B cell (primary cell): ENCODE measurements at regions of chr9 and their contacts with region 1.

Region 1: GRCh38 chr9:108761655-108762347 is 94.0 kb downstream of the ACTL7B start:
- DNase-seq: peak; percentile 60
- ATAC-seq: no peak
- H3K4me3 ChIP-seq: no peak overlapping the region
- H3K4me3 Mint-ChIP-seq: no peak overlapping the region
- H3K27ac ChIP-seq: no peak overlapping the region
- H3K27ac Mint-ChIP-seq: no peak overlapping the region
- H3K4me1 ChIP-seq: peaks cover 3 to 10% of the 10 kb centered on the region in 2 donors
- H3K4me1 Mint-ChIP-seq: peaks cover 7% of the 10 kb centered on the region
- H3K27me3 ChIP-seq: no peaks in the 10 kb centered on the region
- H3K27me3 Mint-ChIP-seq: no peaks in the 10 kb centered on the region
- CTCF ChIP-seq: peak; percentile 91

Region 2: GRCh38 chr9:107421947-107422793 is 1339.6 kb before region 1 on chr9:
- CTCF ChIA-PET with region 1: interaction called, 15 read pairs
- POLR2A ChIA-PET with region 1: no interaction called
- intact Hi-C with region 1: no loop called
- DNase-seq: peak; percentile 30
- ATAC-seq: no peak
- H3K4me3 ChIP-seq: no peak overlapping the region
- H3K4me3 Mint-ChIP-seq: no peak overlapping the region
- H3K27ac ChIP-seq: no peak overlapping the region
- H3K27ac Mint-ChIP-seq: no peak overlapping the region
- H3K4me1 ChIP-seq: peaks cover 3 to 8% of the 10 kb centered on the region in 2 donors
- H3K4me1 Mint-ChIP-seq: peaks cover 9% of the 10 kb centered on the region
- H3K27me3 ChIP-seq: peaks cover 0 to 11% (median 5%) of the 10 kb centered on the region in 4 experiments
- H3K27me3 Mint-ChIP-seq: peaks cover 30% of the 10 kb centered on the region
- CTCF ChIP-seq: no peak

Region 3: DNA sequence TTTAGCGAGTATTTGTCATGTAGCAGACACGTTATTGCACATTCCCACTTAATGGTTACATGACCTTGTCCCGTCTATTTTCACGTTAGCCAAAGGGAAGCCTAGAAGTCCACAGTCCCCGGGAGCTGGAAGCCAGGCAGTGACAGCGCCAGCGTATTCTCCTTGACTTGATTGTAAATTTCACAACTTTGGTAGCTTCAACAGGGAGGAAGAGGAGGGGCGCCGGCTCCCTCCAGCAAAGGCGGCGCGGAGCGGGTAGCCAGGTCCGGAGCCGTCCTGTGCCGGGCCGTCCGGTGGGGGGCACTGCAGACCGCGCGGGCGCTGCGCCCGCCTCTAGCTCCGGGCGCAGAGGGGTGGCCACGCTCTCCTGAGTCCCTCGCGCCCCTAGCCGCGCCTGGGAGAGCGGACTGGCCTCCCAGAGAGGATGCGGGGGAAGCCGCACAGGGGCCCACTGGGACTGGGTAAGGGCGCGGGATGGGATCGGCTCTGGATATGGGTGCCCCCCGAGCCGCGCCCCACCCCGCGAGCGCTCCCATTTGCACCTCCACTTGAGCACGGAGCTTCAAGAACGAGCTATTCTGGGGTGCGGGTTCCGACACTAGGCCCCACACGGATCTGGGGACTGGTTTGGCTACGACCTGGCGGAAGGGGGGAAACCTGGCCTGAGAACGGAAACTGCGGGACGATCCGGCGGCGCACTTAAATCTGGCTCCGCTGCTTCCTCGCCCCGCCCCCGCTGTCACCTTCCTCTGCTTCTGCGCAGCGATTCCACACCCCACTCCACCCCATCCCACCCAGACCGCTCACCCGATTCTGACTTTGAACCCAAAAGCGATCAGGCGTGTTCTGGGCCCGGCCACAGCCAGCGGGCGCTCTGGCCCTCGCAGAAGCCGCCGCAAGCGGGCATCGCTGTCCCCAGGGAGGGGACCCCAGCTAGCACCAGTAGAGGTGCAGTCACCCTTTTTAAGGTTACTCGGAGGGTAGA is 1296.0 kb before region 1 on chr9:
- CTCF ChIA-PET with region 1: interaction called, 11 read pairs
- POLR2A ChIA-PET with region 1: no interaction called
- intact Hi-C with region 1: no loop called
- DNase-seq: peak; percentile 64
- ATAC-seq: peak; percentile 84
- H3K4me3 ChIP-seq: peak overlapping the region; percentile 25 to 59 (median 47)
- H3K4me3 Mint-ChIP-seq: peak overlapping the region; percentile 80
- H3K27ac ChIP-seq: no peak overlapping the region
- H3K27ac Mint-ChIP-seq: no peak overlapping the region
- H3K4me1 ChIP-seq: peaks cover 13 to 15% of the 10 kb centered on the region in 2 donors
- H3K4me1 Mint-ChIP-seq: peaks cover 13% of the 10 kb centered on the region
- H3K27me3 ChIP-seq: peaks cover 0 to 25% (median 17%) of the 10 kb centered on the region in 4 experiments
- H3K27me3 Mint-ChIP-seq: peaks cover 39% of the 10 kb centered on the region
- CTCF ChIP-seq: peak; percentile 78

Region 4: GRCh38 chr9:107484117-107484723 is 1277.6 kb before region 1 on chr9:
- CTCF ChIA-PET with region 1: interaction called, 6 read pairs
- POLR2A ChIA-PET with region 1: no interaction called
- intact Hi-C with region 1: loop called (anchors 5 kb)
- DNase-seq: peak; percentile 65
- ATAC-seq: no peak
- H3K4me3 ChIP-seq: no peak overlapping the region
- H3K4me3 Mint-ChIP-seq: no peak overlapping the region
- H3K27ac ChIP-seq: no peak overlapping the region
- H3K27ac Mint-ChIP-seq: no peak overlapping the region
- H3K4me1 ChIP-seq: peaks cover 17 to 23% of the 10 kb centered on the region in 2 donors
- H3K4me1 Mint-ChIP-seq: peaks cover 9% of the 10 kb centered on the region
- H3K27me3 ChIP-seq: peaks cover 0 to 27% (median 12%) of the 10 kb centered on the region in 4 experiments
- H3K27me3 Mint-ChIP-seq: peaks cover 22% of the 10 kb centered on the region
- CTCF ChIP-seq: peak; percentile 62

Region 5: DNA sequence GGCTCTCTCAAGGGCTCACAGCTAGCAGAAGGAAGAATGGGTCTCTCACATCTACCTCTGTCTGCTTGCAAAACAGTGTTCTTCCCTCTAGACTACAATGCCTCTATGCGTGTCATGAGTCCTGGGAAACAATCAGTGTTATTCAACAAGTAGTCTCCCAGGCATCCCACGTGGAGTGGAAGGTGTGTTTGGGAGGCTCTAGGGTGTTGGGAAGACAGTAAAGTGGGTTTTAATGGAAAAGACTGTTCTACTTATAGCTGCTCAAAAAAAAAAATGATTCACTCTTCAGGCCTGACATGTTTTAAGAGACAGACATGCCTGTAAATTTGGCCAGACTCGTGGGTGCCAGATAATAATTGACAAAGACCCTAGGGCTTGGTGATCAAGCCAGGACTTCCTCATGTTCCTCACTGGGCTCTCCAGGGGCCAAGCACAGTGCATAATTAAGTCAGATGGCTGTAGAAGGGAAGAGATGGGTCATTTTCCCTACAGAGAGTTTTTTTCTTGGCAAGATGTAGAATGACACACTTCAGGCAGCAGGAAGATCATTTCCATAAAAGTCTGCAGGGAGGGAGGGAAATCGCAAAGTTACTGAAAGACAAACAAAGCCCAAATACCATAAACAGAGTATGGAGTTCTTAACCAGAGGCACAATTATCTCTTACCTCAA is 152.4 kb before region 1 on chr9:
- CTCF ChIA-PET with region 1: no interaction called
- POLR2A ChIA-PET with region 1: no interaction called
- intact Hi-C with region 1: no loop called
- DNase-seq: no peak
- ATAC-seq: no peak
- H3K4me3 ChIP-seq: no peak overlapping the region
- H3K4me3 Mint-ChIP-seq: no peak overlapping the region
- H3K27ac ChIP-seq: no peak overlapping the region
- H3K27ac Mint-ChIP-seq: no peak overlapping the region
- H3K4me1 ChIP-seq: no peaks in the 10 kb centered on the region
- H3K4me1 Mint-ChIP-seq: no peaks in the 10 kb centered on the region
- H3K27me3 ChIP-seq: no peaks in the 10 kb centered on the region
- H3K27me3 Mint-ChIP-seq: no peaks in the 10 kb centered on the region
- CTCF ChIP-seq: no peak

Region 6: GRCh38 chr9:108621991-108622855 is 139.6 kb before region 1 on chr9:
- CTCF ChIA-PET with region 1: no interaction called
- POLR2A ChIA-PET with region 1: no interaction called
- intact Hi-C with region 1: no loop called
- DNase-seq: no peak
- ATAC-seq: no peak
- H3K4me3 ChIP-seq: no peak overlapping the region
- H3K4me3 Mint-ChIP-seq: no peak overlapping the region
- H3K27ac ChIP-seq: no peak overlapping the region
- H3K27ac Mint-ChIP-seq: no peak overlapping the region
- H3K4me1 ChIP-seq: no peaks in the 10 kb centered on the region
- H3K4me1 Mint-ChIP-seq: no peaks in the 10 kb centered on the region
- H3K27me3 ChIP-seq: no peaks in the 10 kb centered on the region
- H3K27me3 Mint-ChIP-seq: peaks cover 5% of the 10 kb centered on the region
- CTCF ChIP-seq: no peak

Region 7: GRCh38 chr9:108710424-108710823 is 51.4 kb before region 1 on chr9:
- CTCF ChIA-PET with region 1: no interaction called
- POLR2A ChIA-PET with region 1: no interaction called
- intact Hi-C with region 1: no loop called
- DNase-seq: no peak
- ATAC-seq: no peak
- H3K4me3 ChIP-seq: no peak overlapping the region
- H3K4me3 Mint-ChIP-seq: no peak overlapping the region
- H3K27ac ChIP-seq: no peak overlapping the region
- H3K27ac Mint-ChIP-seq: no peak overlapping the region
- H3K4me1 ChIP-seq: no peaks in the 10 kb centered on the region
- H3K4me1 Mint-ChIP-seq: no peaks in the 10 kb centered on the region
- H3K27me3 ChIP-seq: no peaks in the 10 kb centered on the region
- H3K27me3 Mint-ChIP-seq: peaks cover 5% of the 10 kb centered on the region
- CTCF ChIP-seq: no peak

Region 8: GRCh38 chr9:109477258-109478050 is 715.7 kb after region 1 on chr9:
- CTCF ChIA-PET with region 1: no interaction called
- POLR2A ChIA-PET with region 1: no interaction called
- intact Hi-C with region 1: no loop called
- DNase-seq: no peak
- ATAC-seq: no peak
- H3K4me3 ChIP-seq: no peak overlapping the region
- H3K4me3 Mint-ChIP-seq: no peak overlapping the region
- H3K27ac ChIP-seq: no peak overlapping the region
- H3K27ac Mint-ChIP-seq: no peak overlapping the region
- H3K4me1 ChIP-seq: no peaks in the 10 kb centered on the region
- H3K4me1 Mint-ChIP-seq: no peaks in the 10 kb centered on the region
- H3K27me3 ChIP-seq: peaks cover 0 to 11% (median 1%) of the 10 kb centered on the region in 4 experiments
- H3K27me3 Mint-ChIP-seq: peaks cover 21% of the 10 kb centered on the region
- CTCF ChIP-seq: no peak